Activated naive CD4-positive, alpha-beta T cell treated with anti-CD3 and anti-CD28 coated beads, Interleukin-2, amount 10 ng/mL, durations not matched to agents 7 days and 5 days (primary cell): ENCODE measurements at regions of chr10 and their contacts with region 1.

Region 1: DNA sequence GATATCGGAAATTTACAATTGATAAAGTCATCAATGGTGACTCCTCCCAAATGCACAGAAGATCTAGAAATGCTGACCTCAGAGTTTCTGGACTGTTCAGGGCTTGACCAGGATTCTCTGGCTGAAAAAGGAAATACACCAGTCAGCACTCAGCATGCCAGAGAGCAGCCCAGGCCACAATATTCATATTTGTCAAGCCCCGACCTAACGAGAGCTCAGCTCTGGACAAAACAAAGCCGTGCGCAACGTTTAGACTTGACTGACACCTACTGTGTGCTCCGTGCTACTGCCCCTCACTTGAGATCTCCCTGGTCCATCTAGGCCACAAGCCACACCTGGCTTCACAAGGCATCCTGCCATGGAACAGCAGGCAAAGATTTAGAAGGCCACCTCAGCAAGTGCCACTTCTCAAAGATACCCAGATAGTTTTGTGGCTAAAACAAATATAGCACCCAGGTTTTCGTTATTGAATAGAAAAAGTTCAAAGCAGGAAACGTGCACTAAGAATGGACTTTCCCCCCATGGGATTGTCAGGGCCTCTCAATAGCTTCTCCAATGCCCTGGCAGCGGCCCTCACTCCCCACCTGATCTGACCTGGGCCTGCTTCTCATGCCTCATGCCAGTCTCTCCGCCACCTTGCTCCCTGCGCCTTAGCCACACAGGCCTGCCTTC is 218.3 kb downstream of the FAM107B start:
- DNase-seq: no peak
- H3K4me3 Mint-ChIP-seq: no peak overlapping the region
- H3K27ac Mint-ChIP-seq: peak overlapping the region; percentile 82
- H3K4me1 Mint-ChIP-seq: peaks cover 91% of the 10 kb centered on the region
- H3K27me3 Mint-ChIP-seq: no peaks in the 10 kb centered on the region

Region 2: GRCh38 chr10:14536241-14537213 is 19.9 kb before region 1 on chr10:
- CTCF ChIA-PET with region 1: interaction called, 47 read pairs
- DNase-seq: peak; percentile 61
- H3K4me3 Mint-ChIP-seq: no peak overlapping the region
- H3K27ac Mint-ChIP-seq: no peak overlapping the region
- H3K4me1 Mint-ChIP-seq: peaks cover 73% of the 10 kb centered on the region
- H3K27me3 Mint-ChIP-seq: no peaks in the 10 kb centered on the region

Region 3: GRCh38 chr10:14543046-14543903 is 13.1 kb before region 1 on chr10:
- CTCF ChIA-PET with region 1: interaction called, 47 read pairs
- DNase-seq: peak; percentile 59
- H3K4me3 Mint-ChIP-seq: peak overlapping the region; percentile 36
- H3K27ac Mint-ChIP-seq: peak overlapping the region; percentile 90
- H3K4me1 Mint-ChIP-seq: peaks cover 80% of the 10 kb centered on the region
- H3K27me3 Mint-ChIP-seq: no peaks in the 10 kb centered on the region

Region 4: DNA sequence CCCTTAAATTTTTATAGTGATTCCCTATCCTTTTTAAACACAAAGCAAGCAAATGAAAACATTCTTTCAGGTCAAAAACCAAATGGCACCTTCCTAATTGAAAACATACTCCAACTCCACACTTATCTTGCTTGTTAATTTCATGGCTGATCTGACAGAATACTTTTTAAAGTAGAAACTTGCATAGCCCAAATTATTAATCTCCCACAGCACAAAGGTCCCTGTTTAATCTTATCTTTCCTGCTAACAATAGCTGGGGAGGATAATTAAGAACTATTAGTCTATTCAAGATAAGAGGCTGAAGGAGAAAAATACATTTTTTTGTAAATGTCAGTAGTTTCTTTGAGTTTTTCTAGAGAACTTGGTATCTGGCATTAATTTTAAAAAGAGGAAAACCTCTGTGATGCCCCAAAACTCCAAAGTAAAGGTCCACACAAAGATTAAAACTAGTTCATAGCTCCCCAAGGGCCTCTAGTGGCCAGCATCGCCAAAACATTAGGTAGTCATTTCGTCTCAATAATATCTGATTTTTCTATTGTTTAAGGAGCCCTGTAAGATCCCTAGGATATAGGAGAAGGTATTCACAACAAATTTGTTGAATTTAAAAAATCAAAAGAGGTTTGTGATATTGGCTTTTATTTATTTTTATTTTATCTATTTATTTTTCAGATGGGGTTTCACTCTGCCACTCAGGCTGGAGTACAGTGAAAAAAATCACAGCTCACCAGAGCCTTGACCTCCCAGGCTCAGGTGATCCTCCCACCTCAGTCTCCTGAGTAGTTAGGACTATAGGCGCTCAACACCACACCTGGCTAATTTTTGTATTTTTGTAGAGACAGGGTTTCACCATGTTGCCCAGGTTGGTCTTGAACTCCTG is 266.7 kb after region 1 on chr10:
- CTCF ChIA-PET with region 1: interaction called, 18 read pairs
- DNase-seq: peak; percentile 59
- H3K4me3 Mint-ChIP-seq: no peak overlapping the region
- H3K27ac Mint-ChIP-seq: no peak overlapping the region
- H3K4me1 Mint-ChIP-seq: peaks cover 5% of the 10 kb centered on the region
- H3K27me3 Mint-ChIP-seq: peaks cover 10% of the 10 kb centered on the region